Dendritic cell treated with granulocyte-macrophage colony-stimulating factor and Interleukin-4, amounts not matched to agents 40 ng/mL and 50 ng/mL, for 4 days (primary cell): ENCODE measurements at regions of chr2 and their contacts with region 1.

Region 1: DNA sequence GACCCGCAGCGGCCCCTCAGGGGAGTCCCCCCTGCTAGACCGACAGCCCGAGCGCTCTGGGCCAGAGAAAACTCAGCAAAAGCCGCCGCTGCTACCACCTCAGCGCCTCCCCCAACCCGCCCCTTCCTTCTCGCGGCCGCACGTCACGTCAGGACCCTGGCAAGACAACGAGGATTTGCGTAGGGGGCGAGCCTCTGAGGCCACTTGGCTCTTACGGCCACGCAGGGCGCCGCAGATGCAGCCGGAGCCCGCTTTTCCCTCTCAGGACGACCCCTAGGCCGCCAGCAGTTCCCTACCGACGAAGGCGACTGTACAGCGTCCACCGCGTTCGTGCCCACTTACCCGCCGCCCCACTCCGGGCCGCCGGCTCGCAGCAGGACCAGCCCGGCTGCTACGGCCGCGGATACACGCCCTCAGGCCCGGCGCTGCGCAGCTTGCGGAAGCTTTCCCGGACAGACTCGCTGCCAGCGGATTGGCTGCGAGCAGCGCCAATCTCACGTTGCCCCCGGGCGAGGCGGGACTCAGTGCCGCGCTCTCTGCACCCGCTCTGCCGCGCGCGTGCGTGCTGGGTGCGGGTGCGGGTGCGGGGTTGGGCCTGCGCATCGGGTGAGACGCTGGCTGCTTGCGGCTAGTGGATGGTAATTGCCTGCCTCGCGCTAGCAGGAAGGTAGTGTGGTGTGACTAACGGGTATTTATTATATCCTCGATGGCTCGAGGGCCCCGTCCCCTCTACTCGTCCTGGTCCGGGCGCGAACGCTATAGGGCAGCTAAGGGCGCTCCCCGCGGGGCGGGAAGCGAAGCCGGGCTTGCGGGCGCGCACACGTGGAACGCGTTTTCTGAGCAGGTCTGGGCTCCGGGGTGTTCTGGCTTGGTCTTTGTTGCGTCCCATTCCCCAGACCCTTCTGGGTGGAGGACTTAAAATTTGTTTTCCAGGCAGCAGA is at the starts of genes ORMDL1 and PMS1:
- H3K4me3 Mint-ChIP-seq: peak within 1 kb of the TSS; percentile 94
- H3K27ac Mint-ChIP-seq: peak within 1 kb of the TSS; percentile 94
- H3K4me1 Mint-ChIP-seq: peaks cover 54% of the 10 kb centered on the region
- H3K27me3 Mint-ChIP-seq: no peaks in the 10 kb centered on the region

Region 2: GRCh38 chr2:189440947-189441708 is 343.1 kb before region 1 on chr2 and contains the start of gene WDR75:
- intact Hi-C with region 1: loop called (anchors 1 kb)
- H3K4me3 Mint-ChIP-seq: peak within 1 kb of the TSS; percentile 99
- H3K27ac Mint-ChIP-seq: peak within 1 kb of the TSS; percentile 99
- H3K4me1 Mint-ChIP-seq: no peaks in the 10 kb centered on the region
- H3K27me3 Mint-ChIP-seq: peaks cover 2% of the 10 kb centered on the region

Region 3: DNA sequence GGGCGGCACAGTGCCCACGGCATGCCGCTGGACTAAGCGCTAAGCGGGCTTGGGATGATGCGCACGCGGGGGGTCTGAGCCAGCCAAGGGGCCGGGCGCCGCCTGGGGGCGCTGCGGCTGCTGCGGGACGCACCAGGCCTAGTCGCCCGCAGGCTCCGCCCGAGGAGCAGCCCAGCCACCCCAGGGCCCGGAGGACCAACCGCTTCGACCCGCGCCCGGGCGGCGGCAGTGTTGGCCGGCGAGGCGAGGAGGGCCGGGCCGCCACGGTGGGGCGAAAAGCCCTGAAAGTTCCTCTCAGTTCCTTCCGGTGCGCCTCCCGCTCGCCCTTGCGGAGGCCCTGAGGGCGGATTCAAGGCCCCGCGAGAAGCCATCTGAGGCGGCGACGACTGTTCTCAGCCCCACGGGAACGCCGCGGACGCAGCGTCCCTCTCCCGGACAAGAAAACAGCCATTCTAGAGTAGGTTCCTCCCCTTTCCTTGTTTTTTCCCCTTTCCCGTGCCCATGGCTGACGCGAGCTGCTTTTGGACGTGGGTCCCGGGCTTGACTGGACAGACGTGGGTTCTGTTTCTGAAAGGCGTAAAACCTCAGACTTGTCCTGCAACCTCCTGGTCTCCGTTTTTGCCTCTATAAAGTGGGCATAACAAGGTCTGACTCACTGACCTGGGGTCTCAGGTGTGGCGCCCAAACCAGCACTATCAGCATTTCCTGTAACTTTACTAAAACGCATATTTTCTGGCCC is 109.7 kb before region 1 on chr2 and contains the start of gene ANKAR:
- intact Hi-C with region 1: loop called (anchors 5 kb)
- H3K4me3 Mint-ChIP-seq: peak within 1 kb of the TSS; percentile 83
- H3K27ac Mint-ChIP-seq: peak within 1 kb of the TSS; percentile 96
- H3K4me1 Mint-ChIP-seq: peaks cover 24% of the 10 kb centered on the region
- H3K27me3 Mint-ChIP-seq: no peaks in the 10 kb centered on the region

Region 4: GRCh38 chr2:189751080-189751658 is 33.0 kb before region 1 on chr2:
- intact Hi-C with region 1: loop called (anchors 5 kb)
- H3K4me3 Mint-ChIP-seq: no peak overlapping the region
- H3K27ac Mint-ChIP-seq: no peak overlapping the region
- H3K4me1 Mint-ChIP-seq: peaks cover 5% of the 10 kb centered on the region
- H3K27me3 Mint-ChIP-seq: no peaks in the 10 kb centered on the region

Region 5: DNA sequence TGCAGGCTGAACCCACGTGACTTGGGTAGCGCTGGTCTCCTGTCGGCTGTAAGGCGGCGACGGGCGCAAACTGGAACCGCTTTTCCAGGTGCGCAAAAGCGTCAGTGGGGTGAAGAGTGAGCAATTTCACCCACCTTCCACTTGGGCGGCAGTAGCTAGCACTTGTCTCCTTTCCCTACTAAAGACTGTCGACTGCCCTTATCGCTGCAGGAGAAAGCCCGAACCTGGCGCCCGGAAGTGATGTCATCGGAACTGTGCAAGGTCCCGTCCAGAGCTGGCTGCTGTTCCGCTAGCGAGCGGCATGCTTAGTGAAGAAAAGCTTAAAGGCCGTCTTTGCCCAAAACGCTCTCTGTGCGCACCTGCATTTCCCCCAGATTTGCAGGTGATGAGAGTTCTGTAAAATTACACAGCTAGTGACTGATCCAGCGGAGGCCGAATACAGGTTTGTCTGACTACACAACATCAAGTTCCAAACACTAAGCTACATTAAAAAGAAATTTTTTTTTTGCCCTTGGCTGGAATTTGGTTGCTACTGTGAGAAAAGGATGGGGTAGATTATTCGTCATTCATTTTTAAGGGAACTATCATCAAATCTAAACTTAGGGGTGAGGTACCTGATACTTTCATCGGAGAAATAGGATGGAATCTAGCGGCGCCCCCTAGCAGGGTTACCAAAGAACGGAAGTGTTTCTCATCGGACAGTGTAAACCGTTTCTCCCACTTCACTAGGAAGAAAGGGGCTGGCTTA is 21.5 kb before region 1 on chr2 and contains the start of gene OSGEPL1:
- intact Hi-C with region 1: loop called (anchors 1 kb)
- H3K4me3 Mint-ChIP-seq: peak within 1 kb of the TSS; percentile 83
- H3K27ac Mint-ChIP-seq: peak within 1 kb of the TSS; percentile 91
- H3K4me1 Mint-ChIP-seq: peaks cover 6% of the 10 kb centered on the region
- H3K27me3 Mint-ChIP-seq: no peaks in the 10 kb centered on the region

Region 6: GRCh38 chr2:190319555-190320498 is 535.6 kb after region 1 on chr2 and contains the start of gene HIBCH:
- intact Hi-C with region 1: loop called (anchors 10 kb)
- H3K4me3 Mint-ChIP-seq: peak within 1 kb of the TSS; percentile 82
- H3K27ac Mint-ChIP-seq: peak within 1 kb of the TSS; percentile 80
- H3K4me1 Mint-ChIP-seq: peaks cover 15% of the 10 kb centered on the region
- H3K27me3 Mint-ChIP-seq: no peaks in the 10 kb centered on the region